ENCODE measurements at regions of chr6 and their contacts with region 1.

Region 1: GRCh38 chr6:28940858-28941680 is 17.3 kb upstream of the TRIM27 start:
- DNase-seq: peak; percentile 89
- ATAC-seq: peak; percentile 73
- H3K4me3 ChIP-seq: peak overlapping the region; percentile 68 to 85 (median 79)
- H3K27ac ChIP-seq: peak overlapping the region; percentile 63
- H3K4me1 ChIP-seq: peaks cover 44% of the 10 kb centered on the region
- H3K27me3 ChIP-seq: peaks cover 0 to 7% of the 10 kb centered on the region in 2 experiments; a peak in 1 of 5 replicates
- CTCF ChIP-seq: peak; percentile 13
- EP300 ChIP-seq: no peak
- POLR2A ChIP-seq: no peak
- RAD21 ChIP-seq: no peak

Region 2: DNA sequence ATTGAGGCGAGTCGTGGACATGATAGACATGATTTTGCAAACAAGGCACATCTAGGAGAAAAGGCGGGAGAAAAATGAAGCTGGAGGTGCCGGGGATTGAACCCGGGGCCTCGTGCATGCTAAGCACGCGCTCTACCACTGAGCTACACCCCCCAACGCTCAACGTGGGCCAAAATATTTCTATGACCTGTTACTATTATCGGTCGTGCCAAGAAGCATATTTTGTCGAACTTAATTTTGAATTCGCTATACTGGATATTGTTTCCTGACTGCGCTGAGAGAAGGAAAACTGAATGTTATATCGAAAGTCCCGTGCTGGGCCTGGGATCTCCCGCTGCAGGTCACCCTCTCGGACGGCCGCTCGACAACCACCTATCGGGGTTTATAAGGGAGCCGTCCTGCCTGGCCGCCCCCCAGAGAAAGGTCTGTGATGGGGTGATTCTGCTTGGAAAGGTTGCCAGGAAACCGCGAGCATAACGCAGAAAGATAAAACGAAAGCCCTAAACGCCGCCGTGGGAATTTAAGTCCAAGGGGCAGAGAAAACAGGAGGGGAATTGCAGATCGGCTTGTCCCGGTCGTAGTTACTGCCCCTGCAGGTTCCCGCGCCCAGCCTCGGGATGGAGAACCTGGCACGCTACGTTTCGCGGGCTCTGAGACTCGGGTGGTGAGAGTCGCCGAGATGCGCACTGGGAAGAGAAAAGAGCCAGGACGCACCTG is 77.3 kb before region 1 on chr6:
- CTCF ChIA-PET with region 1: no interaction called
- POLR2A ChIA-PET with region 1: interaction called, 4 read pairs
- in situ Hi-C with region 1: no loop called
- intact Hi-C with region 1: loop called (anchors 2 kb)
- DNase-seq: peak; percentile 72
- ATAC-seq: peak; percentile 47
- H3K4me3 ChIP-seq: peak overlapping the region; percentile 62 to 78 (median 63)
- H3K27ac ChIP-seq: peak overlapping the region; percentile 56
- H3K4me1 ChIP-seq: peaks cover 39% of the 10 kb centered on the region
- H3K27me3 ChIP-seq: peaks cover 0 to 11% of the 10 kb centered on the region in 2 experiments; a peak in 4 of 5 replicates
- CTCF ChIP-seq: no peak; the same call in 1 of the 2 replicates
- EP300 ChIP-seq: no peak
- POLR2A ChIP-seq: 0 out of 4 replicates have a peak, but pooled peaks of 1 of the 2 experiments have one; percentile 31
- RAD21 ChIP-seq: peak; percentile 14; the same call in 1 of the 2 replicates

Region 3: GRCh38 chr6:28895134-28895812 is 45.8 kb before region 1 on chr6:
- CTCF ChIA-PET with region 1: no interaction called
- POLR2A ChIA-PET with region 1: interaction called, 11 read pairs
- in situ Hi-C with region 1: no loop called
- intact Hi-C with region 1: loop called (anchors 1 kb)
- DNase-seq: peak; percentile 98
- ATAC-seq: peak; percentile 86
- H3K4me3 ChIP-seq: peak overlapping the region; percentile 82 to 97 (median 86)
- H3K27ac ChIP-seq: peak overlapping the region; percentile 93
- H3K4me1 ChIP-seq: peaks cover 40% of the 10 kb centered on the region
- H3K27me3 ChIP-seq: no peaks in the 10 kb centered on the region; a peak in 1 of 5 replicates
- CTCF ChIP-seq: no peak
- EP300 ChIP-seq: no peak
- POLR2A ChIP-seq: peak; percentile 90 to 95
- RAD21 ChIP-seq: no peak

Region 4: DNA sequence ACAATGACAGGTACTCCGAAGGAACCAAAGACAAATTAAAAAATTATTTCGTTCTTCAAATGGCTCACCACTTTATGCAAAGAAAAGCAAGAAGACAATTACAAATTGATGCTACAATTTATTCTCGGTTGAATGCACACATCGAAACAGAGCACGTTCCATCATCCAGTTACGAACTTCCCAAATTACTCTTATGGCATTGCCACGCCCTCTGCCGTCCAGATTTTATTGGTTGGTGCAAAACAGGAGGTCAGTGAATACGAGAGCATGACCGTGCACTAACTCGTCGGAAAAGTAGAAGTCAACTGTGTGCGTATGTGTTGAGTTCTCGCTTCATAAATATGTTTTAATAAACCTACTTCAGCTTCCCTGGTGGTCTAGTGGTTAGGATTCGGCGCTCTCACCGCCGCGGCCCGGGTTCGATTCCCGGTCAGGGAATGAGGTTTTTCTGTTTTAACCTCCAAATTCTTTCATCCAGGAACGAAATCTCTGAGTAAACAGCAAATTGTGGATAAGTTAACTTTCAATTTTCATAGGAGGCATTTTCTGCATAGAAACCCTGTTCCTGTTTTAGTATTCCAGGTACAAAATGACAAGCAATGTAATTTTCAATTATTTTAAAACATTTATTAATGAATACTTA is 40.9 kb after region 1 on chr6:
- CTCF ChIA-PET with region 1: no interaction called
- POLR2A ChIA-PET with region 1: interaction called, 9 read pairs
- in situ Hi-C with region 1: loop called (anchors 5 kb)
- intact Hi-C with region 1: loop called (anchors 1 kb)
- DNase-seq: peak; percentile 98
- ATAC-seq: peak; percentile 26
- H3K4me3 ChIP-seq: peak overlapping the region; percentile 71 to 97 (median 83)
- H3K27ac ChIP-seq: peak overlapping the region; percentile 98
- H3K4me1 ChIP-seq: peaks cover 62% of the 10 kb centered on the region
- H3K27me3 ChIP-seq: no peaks in the 10 kb centered on the region; a peak in 2 of 5 replicates
- CTCF ChIP-seq: peak; percentile 63
- EP300 ChIP-seq: 0 out of 4 replicates have a peak, but pooled peaks of 1 of the 2 experiments have one; percentile 13
- POLR2A ChIP-seq: no peak
- RAD21 ChIP-seq: peak; percentile 27; the same call in 1 of the 2 replicates

Region 5: GRCh38 chr6:29516108-29516507 is 575.0 kb after region 1 on chr6:
- CTCF ChIA-PET with region 1: no interaction called
- POLR2A ChIA-PET with region 1: no interaction called
- in situ Hi-C with region 1: no loop called
- intact Hi-C with region 1: no loop called
- DNase-seq: no peak
- ATAC-seq: no peak
- H3K4me3 ChIP-seq: no peak overlapping the region
- H3K27ac ChIP-seq: no peak overlapping the region
- H3K4me1 ChIP-seq: no peaks in the 10 kb centered on the region
- H3K27me3 ChIP-seq: no peaks in the 10 kb centered on the region
- CTCF ChIP-seq: no peak
- EP300 ChIP-seq: no peak
- POLR2A ChIP-seq: no peak
- RAD21 ChIP-seq: no peak

Measured in HepG2 (cell line).